ENCODE measurements at regions of chrX and their contacts with region 1.

Region 1: DNA sequence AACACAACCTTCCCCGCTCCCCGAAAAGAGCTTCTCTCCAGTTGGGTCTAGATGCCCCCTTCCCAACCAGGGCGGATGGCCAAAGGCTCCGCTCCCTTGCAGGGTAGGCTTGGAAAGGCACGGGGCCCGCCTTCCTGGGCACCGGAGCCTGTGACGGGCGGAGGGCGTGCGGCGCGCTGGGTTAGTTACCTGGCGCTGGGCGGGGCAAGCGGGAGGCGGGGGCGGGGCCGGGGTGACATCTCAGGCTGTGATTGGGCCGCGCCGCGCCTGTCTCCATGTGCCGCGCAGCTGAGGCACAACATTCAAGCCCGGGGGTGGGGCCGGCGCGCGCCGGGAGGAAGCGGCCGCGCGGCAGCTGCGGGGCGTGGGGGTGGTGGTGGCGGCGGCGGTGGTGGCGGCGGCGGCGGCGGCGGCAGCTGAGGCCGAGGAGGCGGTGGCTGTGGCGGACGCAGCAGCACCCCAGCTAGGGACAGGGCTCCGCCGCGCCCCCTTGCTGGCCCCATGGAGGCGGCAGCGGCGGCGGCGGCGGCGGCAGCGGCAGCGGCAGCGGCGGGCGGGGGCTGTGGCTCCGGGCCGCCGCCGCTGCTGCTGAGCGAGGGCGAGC is at the start of gene REPS2:
- DNase-seq: peak; percentile 83
- ATAC-seq: peak; percentile 97
- total RNA-seq, gene REPS2: 5.9 TPM

Region 2: DNA sequence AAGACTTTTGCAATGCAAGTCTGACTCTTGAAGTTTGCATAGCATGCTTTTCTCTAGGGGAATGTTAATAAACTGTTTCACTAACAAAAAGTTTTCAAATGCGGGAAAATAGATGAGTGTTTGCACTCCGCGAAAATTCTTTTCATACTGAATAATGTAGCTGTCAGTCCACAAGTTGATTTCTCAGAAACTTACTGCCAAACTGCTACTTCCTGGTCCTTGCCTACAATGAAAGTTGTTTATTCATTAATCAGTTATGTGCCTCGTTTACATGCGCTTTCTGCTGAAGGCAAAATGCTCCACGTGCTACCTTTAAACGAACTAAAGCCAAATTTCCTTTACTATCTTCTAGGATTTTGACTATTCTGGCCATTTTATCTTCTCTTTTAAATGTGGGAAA is 613.0 kb before region 1 on chrX:
- intact Hi-C with region 1: no loop called
- DNase-seq: no peak
- ATAC-seq: no peak

Region 3: DNA sequence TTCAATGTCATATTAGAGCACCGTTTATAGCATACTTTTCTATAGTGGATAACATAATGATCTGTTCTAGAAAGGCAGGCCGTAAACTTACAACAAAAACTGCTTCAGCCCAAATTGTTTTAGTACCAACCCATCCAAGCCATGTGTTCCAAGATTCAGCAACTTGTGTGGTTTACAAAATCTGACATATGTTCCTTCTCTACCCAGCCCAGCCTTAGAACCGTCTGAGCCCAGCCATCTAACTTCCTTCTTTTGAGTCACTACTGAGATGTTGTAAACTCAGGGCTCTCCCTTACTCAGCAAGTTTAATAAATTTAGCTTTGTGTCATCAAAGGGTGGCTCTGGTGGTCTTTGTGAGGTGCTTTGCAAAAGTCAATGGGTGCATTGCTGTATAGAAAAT is 32.4 kb before region 1 on chrX:
- intact Hi-C with region 1: loop called (anchors 2 kb)
- DNase-seq: no peak
- ATAC-seq: peak; percentile 22

Measured in sciatic nerve (tissue), 2 donors.